Naive thymus-derived CD8-positive, alpha-beta T cell (primary cell): ENCODE measurements at regions of chr14 and their contacts with region 1.

Region 1: GRCh38 chr14:49892636-49893308 is at the start of gene ARF6:
- DNase-seq: peak; percentile 88 to 98 (median 90)
- ATAC-seq: peak; percentile 78 to 82
- H3K4me3 Mint-ChIP-seq: peak within 1 kb of the TSS; percentile 92 to 100 (median 98)
- H3K27ac Mint-ChIP-seq: peak within 1 kb of the TSS; percentile 98 to 100 (median 99)
- H3K4me1 Mint-ChIP-seq: peaks cover 22 to 44% (median 36%) of the 10 kb centered on the region in 4 donors
- H3K27me3 Mint-ChIP-seq: peaks cover 0 to 1% (median 0%) of the 10 kb centered on the region in 5 donors
- polyA plus RNA-seq, gene ARF6: 74.6 to 100 (median 97.6) TPM

Region 2: GRCh38 chr14:49786315-49787110 is 106.3 kb before region 1 on chr14:
- POLR2A ChIA-PET with region 1: no interaction called
- DNase-seq: no peak
- ATAC-seq: no peak
- H3K4me3 Mint-ChIP-seq: no peak overlapping the region
- H3K27ac Mint-ChIP-seq: peak overlapping the region in 4 of 10 donors; percentile 42 to 91 (median 75)
- H3K4me1 Mint-ChIP-seq: peaks cover 0 to 5% (median 2%) of the 10 kb centered on the region in 4 donors
- H3K27me3 Mint-ChIP-seq: no peaks in the 10 kb centered on the region

Region 3: DNA sequence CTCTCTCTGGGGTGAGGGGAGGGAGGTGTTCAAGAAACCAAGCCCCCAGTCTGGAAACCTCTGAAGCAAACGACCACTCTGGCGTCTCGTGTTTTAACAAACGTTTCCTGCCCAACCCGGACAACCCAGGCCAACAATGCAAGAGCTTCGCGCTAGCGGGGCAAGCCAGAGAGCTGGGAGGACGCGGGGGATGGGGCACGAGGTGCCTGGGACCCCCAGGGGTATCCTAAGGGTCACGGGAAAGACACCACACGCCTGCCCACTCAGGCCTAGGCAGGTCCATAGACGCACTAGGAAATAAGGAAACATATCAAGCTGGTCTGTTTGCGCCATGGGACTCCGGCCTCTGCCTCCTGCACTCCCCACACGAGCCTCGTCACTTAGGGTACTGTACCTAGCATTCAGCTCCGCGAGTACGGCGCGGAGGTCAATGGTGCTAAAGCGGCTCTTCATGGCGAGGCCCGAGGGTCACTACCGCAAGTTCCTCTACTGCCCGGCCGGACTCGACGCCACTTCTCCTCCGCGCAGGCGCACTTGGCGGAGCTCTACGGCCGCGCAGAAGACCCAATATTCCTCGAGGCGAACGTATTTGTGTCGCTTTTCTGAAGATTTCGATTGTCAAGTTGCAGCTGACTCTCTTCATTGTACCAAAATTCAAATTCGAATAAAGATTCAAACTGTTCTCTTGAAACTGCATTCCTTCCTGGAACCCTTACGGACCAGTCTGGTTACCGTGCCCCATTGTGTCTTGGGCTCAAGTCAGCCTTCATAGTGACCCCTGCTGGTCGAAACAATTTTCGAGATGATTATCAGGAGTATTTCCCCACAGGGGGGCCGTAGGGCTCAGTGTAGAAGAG is 40.2 kb before region 1 on chr14 and contains the start of gene NEMF:
- POLR2A ChIA-PET with region 1: interaction called, 17 read pairs
- DNase-seq: peak; percentile 57 to 89 (median 78)
- ATAC-seq: peak; percentile 80 to 84
- H3K4me3 Mint-ChIP-seq: peak within 1 kb of the TSS; percentile 91 to 100 (median 96)
- H3K27ac Mint-ChIP-seq: peak within 1 kb of the TSS; percentile 93 to 99 (median 96)
- H3K4me1 Mint-ChIP-seq: peaks cover 20 to 48% (median 46%) of the 10 kb centered on the region in 4 donors
- H3K27me3 Mint-ChIP-seq: no peaks in the 10 kb centered on the region
- polyA plus RNA-seq, gene NEMF: 39.6 to 46.1 (median 43.5) TPM

Region 4: DNA sequence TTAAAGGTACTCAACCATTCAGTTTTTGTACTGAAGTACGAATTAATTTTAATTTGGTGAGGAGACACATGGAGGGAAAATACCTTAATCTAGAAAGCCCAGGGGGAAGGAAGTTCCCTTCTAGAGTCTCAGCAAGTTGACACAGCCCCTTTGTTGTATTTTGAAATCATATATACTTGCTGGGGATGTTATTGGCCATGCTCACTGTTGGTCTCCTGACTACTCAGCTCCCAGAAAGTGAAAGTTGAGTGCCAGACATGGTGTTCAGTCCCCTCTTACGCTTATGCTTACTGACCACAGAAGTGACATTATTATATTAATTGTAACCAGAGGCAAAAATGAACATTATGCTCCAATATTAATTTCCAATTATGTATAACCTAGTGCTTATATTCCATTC is 28.2 kb after region 1 on chr14:
- POLR2A ChIA-PET with region 1: no interaction called
- DNase-seq: no peak
- ATAC-seq: no peak
- H3K4me3 Mint-ChIP-seq: no peak overlapping the region
- H3K27ac Mint-ChIP-seq: peak overlapping the region in 1 of 10 donors; percentile 3
- H3K4me1 Mint-ChIP-seq: peaks cover 7 to 31% (median 11%) of the 10 kb centered on the region in 4 donors
- H3K27me3 Mint-ChIP-seq: no peaks in the 10 kb centered on the region

Region 5: GRCh38 chr14:49940808-49941421 is 48.1 kb after region 1 on chr14:
- POLR2A ChIA-PET with region 1: interaction called, 25 read pairs
- DNase-seq: peak in 3 of 10 donors; percentile 37 to 53 (median 50)
- ATAC-seq: peak; percentile 74
- H3K4me3 Mint-ChIP-seq: peak overlapping the region in 9 of 10 donors; percentile 29 to 68 (median 58)
- H3K27ac Mint-ChIP-seq: peak overlapping the region in 9 of 10 donors; percentile 18 to 88 (median 71)
- H3K4me1 Mint-ChIP-seq: peaks cover 27 to 61% (median 58%) of the 10 kb centered on the region in 4 donors
- H3K27me3 Mint-ChIP-seq: no peaks in the 10 kb centered on the region

Region 6: DNA sequence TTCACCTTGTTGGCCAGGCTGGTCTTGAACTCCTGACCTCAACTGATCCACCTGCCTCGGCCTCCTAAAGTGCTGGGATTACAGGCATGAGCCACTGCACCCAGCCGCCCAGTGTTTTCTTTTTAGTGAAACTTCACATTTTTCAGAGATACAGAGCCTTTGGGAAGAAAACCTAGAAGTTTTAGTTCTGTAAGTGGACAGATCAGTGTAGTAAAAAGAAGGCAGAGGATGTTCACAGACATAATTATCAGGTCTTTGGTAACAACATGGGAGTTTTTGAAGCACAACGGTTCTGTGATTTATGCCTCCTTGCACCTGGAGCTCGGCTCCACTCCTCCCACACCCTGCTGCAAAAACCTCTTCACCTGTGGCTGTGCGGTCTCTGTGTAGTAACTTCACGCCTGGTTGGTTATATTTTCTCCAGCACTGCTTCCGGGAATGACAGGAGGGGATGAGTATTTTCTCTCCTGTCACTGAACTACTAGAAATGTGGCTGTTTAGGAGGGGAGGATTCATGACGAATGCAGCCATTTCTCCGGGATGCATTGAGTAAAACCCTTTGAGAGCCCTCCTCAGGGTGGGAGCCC is 67.1 kb after region 1 on chr14:
- POLR2A ChIA-PET with region 1: no interaction called
- DNase-seq: peak in 2 of 10 donors; percentile 4 to 16
- ATAC-seq: peak; percentile 78 to 84
- H3K4me3 Mint-ChIP-seq: peak overlapping the region in 8 of 10 donors; percentile 15 to 73 (median 44)
- H3K27ac Mint-ChIP-seq: peak overlapping the region; percentile 19 to 85 (median 71)
- H3K4me1 Mint-ChIP-seq: peaks cover 4 to 50% (median 7%) of the 10 kb centered on the region in 4 donors
- H3K27me3 Mint-ChIP-seq: no peaks in the 10 kb centered on the region

Region 7: DNA sequence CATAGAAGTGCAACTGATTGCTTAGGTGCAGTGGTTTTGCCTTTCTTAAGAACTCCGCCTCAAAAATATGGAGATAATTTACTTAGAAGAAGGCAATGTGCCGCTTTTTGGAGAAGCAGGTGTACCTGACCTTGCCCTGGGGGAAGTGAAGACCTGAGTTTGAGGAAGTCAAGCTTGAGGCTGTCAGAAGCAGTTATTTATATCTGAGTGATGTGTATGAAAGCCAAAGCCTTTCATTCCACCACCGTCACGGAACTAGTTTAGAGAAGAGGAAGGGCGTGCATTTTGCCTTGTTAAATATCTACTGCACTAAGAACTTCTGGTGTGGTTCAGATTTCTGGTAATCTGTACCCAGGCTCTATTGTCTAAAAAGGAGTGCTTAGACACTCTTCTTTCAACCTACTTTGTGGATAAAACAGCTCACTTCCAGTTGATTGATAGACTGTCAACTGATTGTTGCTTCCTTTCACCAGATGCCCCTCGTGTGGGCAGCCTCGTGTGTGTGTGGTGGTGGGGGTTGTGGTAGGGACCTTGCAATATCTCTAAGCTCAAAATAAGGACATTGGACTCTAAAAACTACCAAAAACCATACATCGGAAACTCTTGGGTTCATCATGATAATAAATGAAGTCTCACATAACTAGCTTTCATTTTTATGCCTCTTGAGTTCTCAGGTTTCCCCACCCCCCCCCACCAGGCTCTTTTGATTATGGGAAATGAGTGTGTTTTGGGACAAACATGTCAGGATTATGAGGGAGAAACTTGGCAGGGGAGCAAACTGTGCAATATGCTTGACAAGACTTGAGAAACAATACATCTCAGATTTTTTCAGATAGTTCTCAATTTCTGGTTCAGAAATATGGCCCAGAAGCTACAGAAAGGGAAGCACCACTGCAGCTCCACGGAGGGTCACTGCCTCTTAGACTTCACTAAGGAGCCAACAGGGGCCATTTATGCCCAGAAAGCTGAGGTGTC is 78.7 kb after region 1 on chr14:
- POLR2A ChIA-PET with region 1: interaction called, 60 read pairs
- DNase-seq: peak; percentile 19 to 91 (median 68)
- ATAC-seq: peak; percentile 86 to 91
- H3K4me3 Mint-ChIP-seq: peak overlapping the region; percentile 68 to 90 (median 83)
- H3K27ac Mint-ChIP-seq: peak overlapping the region; percentile 93 to 98 (median 96)
- H3K4me1 Mint-ChIP-seq: peaks cover 37 to 74% (median 62%) of the 10 kb centered on the region in 4 donors
- H3K27me3 Mint-ChIP-seq: no peaks in the 10 kb centered on the region

Region 8: GRCh38 chr14:50003213-50004031 is 110.7 kb after region 1 on chr14:
- POLR2A ChIA-PET with region 1: interaction called, 82 read pairs
- DNase-seq: peak; percentile 66 to 91 (median 76)
- ATAC-seq: peak; percentile 46 to 53
- H3K4me3 Mint-ChIP-seq: peak overlapping the region; percentile 77 to 94 (median 90)
- H3K27ac Mint-ChIP-seq: peak overlapping the region; percentile 96 to 99 (median 98)
- H3K4me1 Mint-ChIP-seq: peaks cover 34 to 62% (median 51%) of the 10 kb centered on the region in 4 donors
- H3K27me3 Mint-ChIP-seq: no peaks in the 10 kb centered on the region